Dendritic cell treated with granulocyte-macrophage colony-stimulating factor and Interleukin-4, amounts not matched to agents 40 ng/mL and 50 ng/mL, for 4 days (primary cell): ENCODE measurements at regions of chr5 and their contacts with region 1.

Region 1: GRCh38 chr5:147453875-147454814 is 55.7 kb downstream of the DPYSL3 start:
- H3K4me3 Mint-ChIP-seq: peak overlapping the region; percentile 96
- H3K27ac Mint-ChIP-seq: peak overlapping the region; percentile 25
- H3K4me1 Mint-ChIP-seq: peaks cover 29% of the 10 kb centered on the region
- H3K27me3 Mint-ChIP-seq: peaks cover 46% of the 10 kb centered on the region

Region 2: DNA sequence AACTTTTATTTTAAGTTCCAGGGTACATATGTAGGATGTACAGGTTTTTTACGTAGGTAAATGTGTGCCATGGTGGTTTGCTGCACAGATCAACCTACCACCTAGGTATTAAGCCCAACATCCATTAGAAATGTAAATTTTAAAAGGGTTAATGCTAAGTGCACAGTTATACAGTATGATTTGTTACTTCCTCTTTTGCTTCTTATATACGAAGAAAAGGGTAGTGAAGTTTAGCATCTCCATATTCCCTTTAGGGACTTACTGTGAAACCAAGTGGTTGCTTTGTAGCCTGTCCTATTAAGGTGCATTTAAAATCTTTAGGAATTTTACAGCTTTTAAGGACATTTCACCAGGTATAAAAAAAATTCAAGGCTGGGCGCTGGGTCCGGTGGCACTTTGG is 1204.3 kb before region 1 on chr5:
- intact Hi-C with region 1: no loop called
- H3K4me3 Mint-ChIP-seq: no peak overlapping the region
- H3K27ac Mint-ChIP-seq: no peak overlapping the region
- H3K4me1 Mint-ChIP-seq: no peaks in the 10 kb centered on the region
- H3K27me3 Mint-ChIP-seq: no peaks in the 10 kb centered on the region

Region 3: DNA sequence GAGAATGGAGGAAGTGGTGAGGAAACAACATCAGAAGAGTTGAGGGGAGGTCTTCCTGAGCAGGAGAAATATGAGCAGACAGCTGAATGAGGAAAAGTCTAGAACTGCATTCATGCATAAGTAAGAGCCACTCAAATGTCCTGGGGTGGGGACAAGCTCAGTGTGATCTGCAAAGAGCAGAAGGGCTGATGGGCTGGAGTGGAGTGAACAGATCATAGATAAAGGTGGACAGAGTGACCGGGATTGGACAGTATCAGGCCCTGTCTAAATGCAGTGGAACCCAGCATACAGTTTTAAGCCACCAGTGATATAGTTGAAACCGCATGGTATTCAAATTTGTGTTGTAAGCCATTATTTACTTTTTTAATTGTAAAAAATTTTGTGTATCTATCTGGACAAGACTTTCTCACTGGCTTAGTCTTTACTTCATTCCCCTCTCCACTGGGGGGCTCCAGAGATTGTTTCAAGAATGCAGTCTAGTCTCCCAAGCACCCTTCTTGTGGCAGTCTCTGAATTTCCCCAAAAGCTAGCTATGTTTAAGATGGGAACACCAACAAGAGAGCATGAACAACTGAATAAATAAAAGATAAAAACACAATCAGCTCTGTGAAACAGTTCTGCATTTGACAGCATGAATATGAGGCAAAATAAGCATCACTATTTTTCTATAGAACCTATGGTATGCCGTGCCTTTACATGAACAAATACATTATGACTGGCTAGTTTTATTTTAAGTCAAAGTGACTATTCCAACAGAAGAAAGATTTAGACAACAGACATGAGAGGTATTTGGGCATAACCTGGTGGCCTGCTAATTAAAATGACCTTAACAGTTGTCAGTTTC is 230.0 kb before region 1 on chr5:
- intact Hi-C with region 1: loop called (anchors 5 kb)
- H3K4me3 Mint-ChIP-seq: no peak overlapping the region
- H3K27ac Mint-ChIP-seq: no peak overlapping the region
- H3K4me1 Mint-ChIP-seq: no peaks in the 10 kb centered on the region
- H3K27me3 Mint-ChIP-seq: no peaks in the 10 kb centered on the region

Region 4: DNA sequence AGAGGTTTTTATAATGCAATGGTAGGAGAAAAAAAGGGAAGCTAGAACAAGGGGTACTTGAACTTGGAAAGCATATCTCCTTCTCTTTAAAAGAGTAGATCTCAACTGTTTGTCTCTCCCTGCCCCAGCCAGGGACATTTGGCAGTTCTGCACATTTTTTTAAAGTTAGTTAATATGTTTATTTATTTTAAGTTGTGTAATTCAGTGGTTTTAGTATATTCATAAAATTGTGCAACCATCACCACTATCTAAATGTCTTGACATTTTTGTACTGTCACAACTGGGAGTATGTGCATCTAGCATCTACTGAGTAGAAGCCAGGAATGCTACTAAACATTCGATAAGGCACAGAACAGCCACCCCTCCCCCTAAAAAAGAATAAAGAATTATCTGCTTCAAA is 159.2 kb after region 1 on chr5:
- intact Hi-C with region 1: no loop called
- H3K4me3 Mint-ChIP-seq: no peak overlapping the region
- H3K27ac Mint-ChIP-seq: no peak overlapping the region
- H3K4me1 Mint-ChIP-seq: no peaks in the 10 kb centered on the region
- H3K27me3 Mint-ChIP-seq: no peaks in the 10 kb centered on the region